Activated CD4-positive, alpha-beta T cell treated with anti-CD3 and anti-CD28 coated beads, Interleukin-2, amount 10 ng/mL, durations not matched to agents 24 days and 14 days (primary cell): ENCODE measurements at regions of chr3 and their contacts with region 1.

Region 1: GRCh38 chr3:163890661-163891060 is 1187.6 kb downstream of the SI start:
- DNase-seq: no peak
- H3K4me3 Mint-ChIP-seq: no peak overlapping the region
- H3K27ac Mint-ChIP-seq: no peak overlapping the region
- H3K4me1 Mint-ChIP-seq: no peaks in the 10 kb centered on the region
- H3K27me3 Mint-ChIP-seq: no peaks in the 10 kb centered on the region

Region 2: GRCh38 chr3:163939911-163940310 is 49.2 kb after region 1 on chr3:
- intact Hi-C with region 1: loop called (anchors 2 kb)
- DNase-seq: no peak
- H3K4me3 Mint-ChIP-seq: no peak overlapping the region
- H3K27ac Mint-ChIP-seq: no peak overlapping the region
- H3K4me1 Mint-ChIP-seq: no peaks in the 10 kb centered on the region
- H3K27me3 Mint-ChIP-seq: no peaks in the 10 kb centered on the region